SK-MEL-5 (cell line): ENCODE measurements at regions of chr1 and their contacts with region 1.

Region 1: DNA sequence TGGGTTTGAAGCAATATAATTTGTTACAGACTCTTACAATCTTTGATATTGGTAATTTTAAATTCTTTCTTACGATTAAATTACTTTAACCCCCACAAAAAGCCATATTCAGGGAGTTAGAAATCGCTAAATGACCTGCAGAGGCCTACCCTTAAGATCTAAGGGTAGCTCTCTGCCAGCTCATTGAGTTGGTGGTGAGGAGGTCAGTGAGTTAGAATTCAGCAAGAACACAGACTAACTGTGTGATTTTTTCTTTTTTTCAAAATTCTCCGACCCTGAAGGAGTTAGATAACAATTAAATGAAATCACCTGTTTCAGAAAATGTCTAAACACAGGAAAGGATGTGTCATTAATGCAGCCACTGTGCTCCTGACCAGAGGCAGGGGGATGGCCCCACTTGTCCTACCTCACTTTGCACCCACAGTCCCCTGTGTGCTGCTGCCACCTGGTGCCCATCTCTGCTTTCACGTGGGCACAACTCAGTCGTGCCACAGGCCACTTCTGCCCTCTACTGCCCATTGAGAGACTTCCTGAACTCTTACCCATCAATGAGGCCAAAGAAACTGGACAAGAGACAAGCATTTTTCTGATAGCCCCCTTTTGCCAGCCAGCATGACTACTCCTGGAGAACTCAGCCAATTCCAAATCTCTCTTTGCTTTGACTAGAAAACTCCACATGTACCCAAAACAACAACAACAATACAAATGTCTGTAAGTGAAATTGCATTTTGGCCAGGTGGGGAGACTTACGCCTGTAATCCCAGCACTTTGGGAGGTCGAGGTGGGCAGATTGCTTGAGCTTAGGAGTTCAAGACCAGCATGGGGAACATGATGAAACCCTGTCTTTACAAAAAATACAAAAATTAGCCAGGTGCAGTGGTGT is 8.4 kb downstream of the CFAP45 start:
- DNase-seq: peak; percentile 92

Region 2: GRCh38 chr1:159780583-159781582 is 110.6 kb before region 1 on chr1 and contains the start of gene DUSP23:
- in situ Hi-C with region 1: loop called (anchors 25 kb)
- DNase-seq: peak; percentile 97
- total RNA-seq, gene DUSP23: 59.0 and 78.8 TPM in 2 replicates

Region 3: GRCh38 chr1:159821171-159821867 is 70.2 kb before region 1 on chr1:
- in situ Hi-C with region 1: no loop called
- DNase-seq: peak; percentile 31